Breast epithelium (tissue), 4 donors: ENCODE measurements at regions of chr2 and their contacts with region 1.

Region 1: DNA sequence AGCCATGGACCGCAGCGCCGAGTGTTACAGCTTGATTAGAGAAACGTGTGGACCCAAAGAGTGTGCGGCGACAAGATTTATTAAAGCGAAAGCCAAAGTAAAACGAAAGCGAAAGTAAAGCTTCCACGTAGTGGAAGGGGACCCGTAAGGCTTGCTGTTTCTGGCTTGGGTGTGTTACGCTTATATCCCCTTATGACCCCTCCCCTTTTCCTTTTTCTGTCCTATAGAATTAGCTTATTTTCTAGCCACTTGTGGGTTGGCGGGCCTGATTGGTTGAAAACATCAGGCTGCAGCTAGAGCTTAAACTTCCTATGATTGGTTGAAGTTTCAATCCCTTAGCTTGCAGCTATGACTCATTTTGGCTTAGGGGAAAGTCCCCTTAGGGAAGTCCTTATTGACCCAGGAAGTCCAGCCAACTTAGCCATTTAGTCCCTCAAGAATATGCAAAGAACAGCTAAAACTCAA is 969.7 kb downstream of the DCDC2C start:
- DNase-seq: no peak
- H3K4me3 ChIP-seq: peak overlapping the region in 2 of 3 donors; percentile 3 to 31
- H3K27ac ChIP-seq: no peak overlapping the region
- H3K4me1 ChIP-seq: no peaks in the 10 kb centered on the region
- H3K27me3 ChIP-seq: no peaks in the 10 kb centered on the region
- CTCF ChIP-seq: no peak
- POLR2A ChIP-seq: no peak

Region 2: GRCh38 chr2:4693266-4693812 is 20.3 kb after region 1 on chr2:
- intact Hi-C with region 1: no loop called
- DNase-seq: no peak
- H3K4me3 ChIP-seq: no peak overlapping the region
- H3K27ac ChIP-seq: no peak overlapping the region
- H3K4me1 ChIP-seq: no peaks in the 10 kb centered on the region
- H3K27me3 ChIP-seq: no peaks in the 10 kb centered on the region
- CTCF ChIP-seq: no peak
- POLR2A ChIP-seq: no peak

Region 3: GRCh38 chr2:5077439-5078089 is 404.5 kb after region 1 on chr2:
- intact Hi-C with region 1: loop called (anchors 5 kb)
- DNase-seq: no peak
- H3K4me3 ChIP-seq: no peak overlapping the region
- H3K27ac ChIP-seq: no peak overlapping the region
- H3K4me1 ChIP-seq: no peaks in the 10 kb centered on the region
- H3K27me3 ChIP-seq: no peaks in the 10 kb centered on the region
- CTCF ChIP-seq: no peak
- POLR2A ChIP-seq: no peak